ENCODE measurements at regions of chr1 and their contacts with region 1.

Region 1: DNA sequence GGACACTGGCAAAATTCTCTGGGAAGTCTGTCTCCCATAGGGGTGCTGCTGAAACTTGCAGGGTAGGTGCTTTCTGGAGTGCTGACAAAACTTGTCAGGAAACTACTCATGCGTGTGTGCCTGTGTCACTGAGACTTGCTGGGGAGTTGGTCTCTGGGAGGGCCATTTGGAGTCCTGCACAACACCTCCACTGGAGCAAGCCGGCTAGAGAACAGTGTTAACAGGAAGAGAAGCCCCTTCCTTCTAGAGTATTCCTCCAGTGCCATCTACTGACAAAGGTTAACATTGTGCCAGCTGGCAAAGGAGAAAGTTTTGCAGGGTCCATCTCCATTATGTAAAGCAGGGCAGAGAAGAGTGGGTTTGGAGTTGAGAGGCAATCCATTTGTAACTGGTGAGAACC is 30.0 kb downstream of the ZMYM4 start:
- DNase-seq: no peak
- H3K4me3 ChIP-seq: no peak overlapping the region
- H3K27ac ChIP-seq: peak overlapping the region in 1 of 8 donors; percentile 4
- H3K4me1 ChIP-seq: peaks cover 0 to 19% (median 6%) of the 10 kb centered on the region in 6 donors
- H3K27me3 ChIP-seq: no peaks in the 10 kb centered on the region
- CTCF ChIP-seq: peak in 8 of 11 experiments; percentile 17 to 58 (median 44)
- POLR2A ChIP-seq: no peak

Region 2: DNA sequence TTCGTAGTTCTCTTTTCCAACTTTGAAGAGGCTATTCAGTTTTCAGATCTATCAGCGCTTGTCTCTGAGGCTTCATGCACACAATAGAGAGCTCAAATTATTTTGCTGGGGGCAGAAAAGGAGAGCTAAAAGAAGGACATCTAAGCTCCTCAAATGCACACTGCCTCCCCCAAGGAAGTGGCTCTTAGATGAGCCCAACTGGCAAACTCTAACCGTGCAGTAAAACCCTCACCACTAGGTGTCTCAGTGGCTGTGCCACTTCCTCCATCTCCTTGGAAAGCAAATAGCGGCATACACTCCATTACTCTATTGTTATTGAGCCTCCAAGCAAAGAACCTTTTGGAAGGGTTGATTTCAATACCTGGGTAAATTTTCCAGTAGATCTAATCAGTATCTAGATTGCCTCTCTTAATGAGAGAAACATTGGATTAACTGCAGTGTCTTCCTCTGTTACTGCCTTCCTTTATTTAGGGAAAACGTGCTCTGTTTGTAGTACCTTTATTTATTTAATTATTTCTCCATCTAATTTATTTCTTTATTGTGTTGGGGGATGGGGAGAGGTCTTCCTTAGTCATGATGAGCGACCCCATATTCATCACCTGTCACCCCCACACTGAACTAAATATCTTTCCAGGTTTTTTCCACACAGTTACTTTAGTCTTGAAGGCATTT is 96.3 kb before region 1 on chr1:
- intact Hi-C with region 1: loop called (anchors 5 kb)
- DNase-seq: peak; percentile 74
- H3K4me3 ChIP-seq: peak overlapping the region in 1 of 8 donors; percentile 37
- H3K27ac ChIP-seq: no peak overlapping the region
- H3K4me1 ChIP-seq: peaks cover 0 to 9% (median 8%) of the 10 kb centered on the region in 6 donors
- H3K27me3 ChIP-seq: no peaks in the 10 kb centered on the region
- CTCF ChIP-seq: peak; percentile 64 to 89 (median 84)
- POLR2A ChIP-seq: no peak